K562 (cell line): ENCODE measurements at regions of chr19 and their contacts with region 1.

Region 1: DNA sequence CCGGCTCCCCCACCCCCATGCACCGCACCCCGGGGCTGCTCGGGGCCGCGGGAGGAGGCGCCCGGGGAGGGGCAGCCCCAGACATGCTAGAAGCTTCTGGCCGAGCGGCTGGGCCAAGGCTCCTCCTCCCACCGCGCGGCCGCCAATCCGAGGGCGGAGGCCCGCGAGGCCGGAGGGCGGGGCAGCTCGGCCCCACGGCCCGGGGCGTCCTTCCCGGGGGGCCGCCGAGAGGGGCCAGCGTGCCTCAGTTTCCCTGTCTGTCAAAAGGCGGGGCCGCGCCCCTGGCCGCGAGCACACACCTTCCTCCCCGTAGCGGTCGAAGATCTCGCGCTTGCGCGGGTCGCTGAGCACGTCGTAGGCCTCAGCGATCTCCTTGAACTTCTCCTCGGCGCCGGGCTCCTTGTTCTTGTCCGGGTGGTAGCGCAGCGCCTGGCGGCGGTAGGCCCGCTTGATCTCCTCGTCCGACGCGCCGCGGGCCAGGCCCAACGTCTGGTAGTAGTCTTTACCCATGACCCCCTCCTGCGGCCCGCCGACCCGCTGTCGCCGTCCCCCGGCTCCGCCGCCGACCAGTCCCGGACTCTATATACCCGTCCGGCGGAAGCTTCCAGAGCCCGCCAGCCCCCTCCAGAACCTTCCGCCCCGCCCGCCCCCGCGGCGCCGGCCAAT is at the start of gene DNAJB1:
- DNase-seq: peak; percentile 85 to 89 (median 88)
- ATAC-seq: peak; percentile 86
- H3K4me3 ChIP-seq: peak within 1 kb of the TSS; percentile 98
- H3K27ac ChIP-seq: peak within 1 kb of the TSS; percentile 99
- H3K4me1 ChIP-seq: peaks cover 54 to 55% of the 10 kb centered on the region in 2 experiments
- H3K27me3 ChIP-seq: no peaks in the 10 kb centered on the region
- CTCF ChIP-seq: 0 out of 6 replicates have a peak, but pooled peaks of 1 of the 3 experiments have one; percentile 2
- EP300 ChIP-seq: no peak
- POLR2A ChIP-seq: peak; percentile 98
- RAD21 ChIP-seq: 0 out of 4 replicates have a peak, but pooled peaks of 1 of the 2 experiments have one; percentile 25
- polyA plus RNA-seq, gene DNAJB1: 13.2 to 16.2 TPM

Region 2: GRCh38 chr19:14496028-14496833 is 21.7 kb before region 1 on chr19 and contains the start of gene GIPC1:
- CTCF ChIA-PET with region 1: no interaction called
- POLR2A ChIA-PET with region 1: interaction called, 11 read pairs
- in situ Hi-C with region 1: no loop called
- intact Hi-C with region 1: no loop called
- DNase-seq: peak; percentile 97 to 100 (median 100)
- ATAC-seq: peak; percentile 97
- H3K4me3 ChIP-seq: peak within 1 kb of the TSS; percentile 68
- H3K27ac ChIP-seq: peak within 1 kb of the TSS; percentile 59
- H3K4me1 ChIP-seq: peaks cover 16 to 29% of the 10 kb centered on the region in 2 experiments; a peak in 4 of 5 replicates
- H3K27me3 ChIP-seq: no peaks in the 10 kb centered on the region
- CTCF ChIP-seq: no peak
- EP300 ChIP-seq: no peak
- POLR2A ChIP-seq: no peak
- RAD21 ChIP-seq: no peak
- polyA plus RNA-seq, gene GIPC1: 0.49 to 1.1 TPM

Region 3: DNA sequence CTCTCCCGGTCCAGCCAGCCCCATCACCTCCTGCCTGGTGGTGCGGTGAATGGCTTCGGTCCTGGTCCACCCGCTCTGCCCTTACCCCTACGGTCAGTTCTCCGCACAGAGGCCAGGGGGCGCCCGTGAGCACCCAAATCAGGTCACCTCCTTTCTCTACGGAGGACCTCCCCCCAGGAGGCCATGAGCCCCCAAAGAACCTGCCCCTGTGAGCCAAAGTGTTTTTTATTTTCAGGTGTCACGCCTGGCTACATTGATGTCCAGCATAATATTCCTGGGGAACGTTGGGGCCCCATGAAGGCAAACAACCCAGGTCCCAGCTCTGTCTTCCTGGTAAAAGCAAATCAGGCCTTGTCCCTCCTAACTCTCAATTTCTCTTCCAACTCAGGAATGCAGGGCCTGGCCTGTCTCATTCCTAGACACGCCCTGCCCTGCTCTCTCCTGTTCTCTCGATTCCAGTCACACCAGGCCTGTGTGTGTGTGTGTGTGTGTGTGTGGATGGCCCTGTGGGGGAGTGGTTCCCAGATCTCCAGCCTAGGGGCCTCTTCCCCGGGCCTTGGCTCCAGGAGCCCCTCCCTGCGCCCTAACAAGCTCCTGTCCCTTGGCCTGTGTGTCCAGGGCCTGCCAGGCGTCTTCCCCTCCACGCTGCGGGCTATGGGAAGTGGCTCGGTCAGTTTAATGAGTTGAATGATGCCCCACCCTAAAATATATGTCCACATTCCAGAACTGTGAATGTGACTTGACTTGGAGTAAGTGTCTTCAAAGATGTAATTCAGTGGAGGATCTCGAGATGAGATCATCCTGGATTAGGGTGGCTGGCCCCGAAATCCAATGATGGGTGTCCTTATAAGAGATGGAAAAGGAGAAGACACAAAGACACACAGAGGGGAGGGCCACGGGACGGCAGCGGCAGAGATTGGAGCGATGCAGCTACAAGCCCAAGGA is 12.2 kb before region 1 on chr19:
- CTCF ChIA-PET with region 1: interaction called, 3 read pairs
- POLR2A ChIA-PET with region 1: interaction called, 70 read pairs
- in situ Hi-C with region 1: no loop called
- intact Hi-C with region 1: no loop called
- DNase-seq: peak; percentile 80 to 87 (median 84)
- ATAC-seq: peak; percentile 91
- H3K4me3 ChIP-seq: no peak overlapping the region
- H3K27ac ChIP-seq: no peak overlapping the region; the same call in 2 of the 3 replicates
- H3K4me1 ChIP-seq: peaks cover 23 to 27% of the 10 kb centered on the region in 2 experiments
- H3K27me3 ChIP-seq: no peaks in the 10 kb centered on the region
- CTCF ChIP-seq: peak; percentile 83 to 93 (median 84)
- EP300 ChIP-seq: no peak
- POLR2A ChIP-seq: no peak
- RAD21 ChIP-seq: peak in 1 of 2 experiments; percentile 66; a peak in 2 of 4 replicates

Region 4: GRCh38 chr19:14529254-14530004 is 11.5 kb after region 1 on chr19 and contains the start of gene TECR:
- CTCF ChIA-PET with region 1: no interaction called
- POLR2A ChIA-PET with region 1: interaction called, 11 read pairs
- in situ Hi-C with region 1: no loop called
- intact Hi-C with region 1: no loop called
- DNase-seq: peak; percentile 96 to 100 (median 98)
- ATAC-seq: peak; percentile 98
- H3K4me3 ChIP-seq: peak within 1 kb of the TSS; percentile 76
- H3K27ac ChIP-seq: peak within 1 kb of the TSS; percentile 89
- H3K4me1 ChIP-seq: peaks cover 29 to 63% of the 10 kb centered on the region in 2 experiments; a peak in 4 of 5 replicates
- H3K27me3 ChIP-seq: no peaks in the 10 kb centered on the region
- CTCF ChIP-seq: no peak
- EP300 ChIP-seq: no peak
- POLR2A ChIP-seq: peak; percentile 98
- RAD21 ChIP-seq: peak in 1 of 2 experiments; percentile 5; a peak in 1 of 4 replicates
- polyA plus RNA-seq, gene TECR: 29.3 to 73.2 TPM

Region 5: GRCh38 chr19:14556662-14557188 is 38.8 kb after region 1 on chr19:
- CTCF ChIA-PET with region 1: no interaction called
- POLR2A ChIA-PET with region 1: interaction called, 6 read pairs
- in situ Hi-C with region 1: no loop called
- intact Hi-C with region 1: loop called (anchors 5 kb)
- DNase-seq: peak; percentile 81 to 88 (median 82)
- ATAC-seq: peak; percentile 94
- H3K4me3 ChIP-seq: no peak overlapping the region
- H3K27ac ChIP-seq: peak overlapping the region; percentile 43; the same call in 1 of the 3 replicates
- H3K4me1 ChIP-seq: peaks cover 12 to 74% of the 10 kb centered on the region in 2 experiments; a peak in 4 of 5 replicates
- H3K27me3 ChIP-seq: no peaks in the 10 kb centered on the region
- CTCF ChIP-seq: peak; percentile 90 to 97 (median 96)
- EP300 ChIP-seq: no peak
- POLR2A ChIP-seq: no peak
- RAD21 ChIP-seq: peak; percentile 36 to 74; a peak in 3 of 4 replicates